ENCODE measurements at regions of chr1 and their contacts with region 1.

Region 1: DNA sequence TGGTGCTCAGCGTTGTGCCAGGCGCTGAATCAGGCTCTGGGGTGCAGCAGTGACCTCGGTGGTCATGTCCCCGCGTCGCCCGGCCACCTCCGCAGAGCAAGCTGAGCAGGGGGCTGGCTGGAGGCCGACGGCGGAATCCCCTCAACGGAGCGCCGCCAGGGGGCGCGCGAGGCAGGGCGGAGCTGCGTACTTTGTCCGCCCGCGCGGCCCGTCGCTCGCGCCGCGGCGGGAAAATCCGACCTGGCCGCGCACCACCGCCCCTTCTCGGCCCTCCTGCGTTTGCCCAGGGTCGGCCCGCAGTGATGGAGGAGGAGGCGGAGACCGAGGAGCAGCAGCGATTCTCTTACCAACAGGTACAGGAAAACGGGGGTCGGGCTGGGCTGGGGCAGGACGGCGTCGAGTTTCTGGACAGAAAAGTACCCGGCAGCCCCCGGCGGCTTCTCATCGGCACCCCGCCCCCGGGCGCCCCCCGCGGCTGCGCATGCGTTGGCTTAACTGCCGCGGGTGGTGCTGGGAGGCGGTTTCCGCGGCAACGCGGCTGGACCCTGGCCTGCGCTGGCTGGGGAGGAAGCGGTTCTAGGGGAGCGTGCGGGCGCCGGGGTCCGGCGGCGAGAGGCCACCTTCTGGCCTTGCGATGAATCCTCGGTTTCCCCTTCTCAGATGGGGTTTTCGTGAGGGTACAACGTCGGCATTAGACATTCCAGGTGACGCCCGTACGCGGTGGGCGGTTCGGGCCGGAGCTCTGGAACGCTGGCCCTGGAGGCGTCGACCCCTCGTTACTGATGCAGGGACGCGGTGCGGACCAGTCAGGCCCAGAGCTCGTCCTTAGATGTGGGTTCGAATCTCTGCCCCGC is at the start of gene CENPS:
- DNase-seq: peak; percentile 88
- H3K4me3 Mint-ChIP-seq: peak within 1 kb of the TSS; percentile 89
- H3K27ac Mint-ChIP-seq: peak within 1 kb of the TSS; percentile 87
- H3K4me1 Mint-ChIP-seq: peaks cover 10% of the 10 kb centered on the region
- H3K27me3 Mint-ChIP-seq: no peaks in the 10 kb centered on the region
- CTCF ChIP-seq: peak; percentile 98
- total RNA-seq, gene CENPS: 19.0 and 19.4 TPM in 2 replicates

Region 2: DNA sequence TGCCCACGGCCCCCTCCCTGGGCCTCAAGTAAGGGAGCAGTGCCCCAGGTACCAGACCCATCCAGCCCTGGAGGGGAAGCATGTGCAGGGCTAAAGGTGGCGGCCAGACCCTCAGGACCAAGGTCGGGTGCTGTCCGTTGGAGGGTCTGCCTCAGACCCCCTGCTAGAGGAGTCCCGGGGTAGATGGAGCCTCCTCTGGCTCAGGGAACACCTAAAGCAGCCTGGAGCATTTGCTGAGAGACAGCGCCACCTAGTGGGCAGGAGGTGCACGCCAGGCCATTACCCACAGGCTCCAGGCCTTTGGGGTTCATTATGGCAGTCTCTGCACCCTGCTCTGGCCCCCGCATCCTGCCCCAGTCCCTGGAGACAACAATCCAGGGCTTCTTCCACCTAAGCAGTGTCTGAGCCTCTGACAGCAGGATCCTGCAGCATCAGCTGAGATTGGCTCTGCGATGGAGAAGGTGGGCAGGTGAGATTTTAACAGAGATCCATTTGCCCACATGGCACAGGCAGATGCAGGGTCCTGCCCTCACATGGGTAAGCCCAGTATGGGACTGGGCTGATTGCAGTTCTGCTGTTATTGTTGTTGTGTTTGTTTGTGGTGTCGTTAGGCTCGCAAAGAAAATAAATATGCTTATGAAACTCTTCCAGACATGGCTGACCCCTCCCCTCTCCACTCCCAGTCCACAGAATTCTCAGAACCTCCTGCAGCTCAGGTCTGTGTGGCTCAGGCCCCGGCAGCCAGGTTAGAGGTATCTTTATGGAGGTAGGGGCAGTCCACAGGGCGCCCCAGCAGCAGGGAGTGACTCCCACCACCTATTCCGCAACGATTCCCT is 562.8 kb before region 1 on chr1:
- CTCF ChIA-PET with region 1: no interaction called
- POLR2A ChIA-PET with region 1: no interaction called
- intact Hi-C with region 1: loop called (anchors 5 kb)
- DNase-seq: peak; percentile 79
- H3K4me3 Mint-ChIP-seq: no peak overlapping the region
- H3K27ac Mint-ChIP-seq: no peak overlapping the region
- H3K4me1 Mint-ChIP-seq: peaks cover 7% of the 10 kb centered on the region
- H3K27me3 Mint-ChIP-seq: no peaks in the 10 kb centered on the region
- CTCF ChIP-seq: peak; percentile 93

Region 3: DNA sequence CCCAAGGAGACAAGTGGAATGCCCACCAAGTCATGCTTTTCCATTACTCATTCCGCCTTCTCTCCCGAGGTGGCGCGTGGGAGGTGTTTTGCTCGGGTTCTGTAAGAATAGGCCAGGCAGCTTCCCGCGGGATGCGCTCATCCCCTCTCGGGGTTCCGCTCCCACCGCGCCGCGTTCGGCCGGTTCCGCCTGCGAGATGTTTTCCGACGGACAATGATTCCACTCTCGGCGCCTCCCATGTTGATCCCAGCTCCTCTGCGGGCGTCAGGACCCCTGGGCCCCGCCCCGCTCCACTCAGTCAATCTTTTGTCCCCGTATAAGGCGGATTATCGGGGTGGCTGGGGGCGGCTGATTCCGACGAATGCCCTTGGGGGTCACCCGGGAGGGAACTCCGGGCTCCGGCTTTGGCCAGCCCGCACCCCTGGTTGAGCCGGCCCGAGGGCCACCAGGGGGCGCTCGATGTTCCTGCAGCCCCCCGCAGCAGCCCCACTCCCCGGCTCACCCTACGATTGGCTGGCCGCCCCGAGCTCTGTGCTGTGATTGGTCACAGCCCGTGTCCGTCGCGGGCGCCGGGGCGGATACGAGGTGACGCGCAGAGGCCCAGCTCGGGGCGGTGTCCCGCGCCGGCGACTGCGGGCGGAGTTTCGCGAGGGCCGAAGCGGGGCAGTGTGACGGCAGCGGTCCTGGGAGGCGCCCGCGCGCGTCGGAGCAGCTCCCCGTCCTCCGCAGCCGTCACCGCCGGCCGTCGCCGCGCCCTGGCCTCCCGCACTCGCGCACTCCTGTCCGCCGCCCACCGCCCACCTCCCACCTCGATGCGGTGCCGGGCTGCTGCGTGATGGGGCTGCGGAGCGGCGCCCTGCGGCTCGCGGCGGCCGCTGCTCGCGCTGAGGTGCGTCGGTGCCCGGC is 220.3 kb before region 1 on chr1 and contains the start of gene KIF1B:
- CTCF ChIA-PET with region 1: interaction called, 9 read pairs
- POLR2A ChIA-PET with region 1: interaction called, 4 read pairs
- intact Hi-C with region 1: loop called (anchors 1 kb)
- DNase-seq: peak; percentile 97
- H3K4me3 Mint-ChIP-seq: peak within 1 kb of the TSS; percentile 98
- H3K27ac Mint-ChIP-seq: peak within 1 kb of the TSS; percentile 84
- H3K4me1 Mint-ChIP-seq: peaks cover 18% of the 10 kb centered on the region
- H3K27me3 Mint-ChIP-seq: no peaks in the 10 kb centered on the region
- CTCF ChIP-seq: peak; percentile 97
- total RNA-seq, gene KIF1B: 34.2 and 35.9 TPM in 2 replicates

Region 4: GRCh38 chr1:10378081-10378841 is 52.2 kb before region 1 on chr1:
- CTCF ChIA-PET with region 1: interaction called, 28 read pairs
- POLR2A ChIA-PET with region 1: interaction called, 3 read pairs
- intact Hi-C with region 1: loop called (anchors 1 kb)
- DNase-seq: no peak
- H3K4me3 Mint-ChIP-seq: no peak overlapping the region
- H3K27ac Mint-ChIP-seq: no peak overlapping the region
- H3K4me1 Mint-ChIP-seq: peaks cover 5% of the 10 kb centered on the region
- H3K27me3 Mint-ChIP-seq: no peaks in the 10 kb centered on the region
- CTCF ChIP-seq: no peak

Region 5: DNA sequence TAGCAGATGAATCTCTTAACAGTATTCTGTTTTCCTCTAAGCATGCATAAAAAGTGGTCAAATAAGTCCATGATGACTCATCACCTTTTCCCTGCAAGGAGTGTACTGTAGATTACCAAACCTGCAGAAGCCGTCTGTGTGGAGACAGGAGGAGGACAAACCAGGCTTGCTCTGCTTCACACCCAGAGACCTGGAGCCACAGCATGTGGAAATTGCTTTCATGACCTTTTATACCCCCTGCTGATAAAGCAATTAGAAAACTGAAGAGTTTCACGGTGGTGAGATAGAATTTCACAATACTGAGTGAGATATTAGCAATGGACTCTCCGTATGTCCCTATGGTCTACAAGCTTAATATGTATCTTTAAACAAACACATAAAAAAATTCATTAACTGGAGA is 28.7 kb after region 1 on chr1:
- CTCF ChIA-PET with region 1: interaction called, 10 read pairs
- POLR2A ChIA-PET with region 1: interaction called, 24 read pairs
- intact Hi-C with region 1: no loop called
- DNase-seq: peak; percentile 88
- H3K4me3 Mint-ChIP-seq: no peak overlapping the region
- H3K27ac Mint-ChIP-seq: peak overlapping the region; percentile 39
- H3K4me1 Mint-ChIP-seq: peaks cover 12% of the 10 kb centered on the region
- H3K27me3 Mint-ChIP-seq: no peaks in the 10 kb centered on the region
- CTCF ChIP-seq: no peak

Measured in MCF 10A (cell line).